ENCODE measurements at regions of chr13 and their contacts with region 1.

Region 1: GRCh38 chr13:43074824-43075510 is 51.6 kb downstream of the DNAJC15 start:
- DNase-seq: no peak
- ATAC-seq: peak; percentile 90
- H3K4me3 ChIP-seq: peak overlapping the region; percentile 9; the same call in 1 of the 2 replicates
- H3K27ac ChIP-seq: peak overlapping the region; percentile 60
- H3K4me1 ChIP-seq: peaks cover 36% of the 10 kb centered on the region
- H3K27me3 ChIP-seq: no peaks in the 10 kb centered on the region
- CTCF ChIP-seq: no peak
- EP300 ChIP-seq: peak in 1 of 2 experiments; percentile 56; a peak in 2 of 4 replicates
- POLR2A ChIP-seq: no peak
- RAD21 ChIP-seq: no peak

Region 2: DNA sequence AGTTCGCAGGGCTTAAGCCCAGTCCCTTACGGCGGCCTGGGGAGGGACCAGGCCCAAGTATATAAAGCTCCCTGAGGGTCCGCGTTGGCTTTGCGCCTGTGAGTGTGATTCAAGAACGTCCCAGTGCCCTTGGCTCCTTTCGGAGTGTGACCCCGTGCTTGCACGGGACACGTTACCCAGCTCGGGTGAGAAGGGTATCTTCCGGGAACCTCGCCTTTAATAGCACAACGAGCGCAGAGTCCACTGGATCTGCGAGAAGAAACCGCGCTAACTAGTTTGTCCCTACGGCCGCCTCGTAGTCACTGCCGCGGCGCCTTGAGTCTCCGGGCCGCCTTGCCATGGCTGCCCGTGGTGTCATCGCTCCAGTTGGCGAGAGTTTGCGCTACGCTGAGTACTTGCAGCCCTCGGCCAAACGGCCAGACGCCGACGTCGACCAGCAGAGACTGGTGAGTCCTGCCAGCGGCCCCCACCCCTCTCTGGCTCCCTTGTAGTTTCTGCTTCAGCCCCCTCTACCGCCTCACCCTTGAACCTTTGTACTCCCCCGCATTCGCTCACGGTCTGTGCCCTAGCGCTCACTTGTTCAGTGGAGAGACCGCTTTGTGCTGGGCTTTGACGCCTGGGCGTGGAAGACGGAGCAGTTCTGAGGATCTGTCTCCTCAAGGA is 51.5 kb before region 1 on chr13 and contains the start of gene DNAJC15:
- CTCF ChIA-PET with region 1: interaction called, 4 read pairs
- POLR2A ChIA-PET with region 1: no interaction called
- RAD21 ChIA-PET with region 1: interaction called, 15 read pairs
- SMC1A ChIA-PET with region 1: interaction called, 11 read pairs
- in situ Hi-C with region 1: no loop called
- intact Hi-C with region 1: loop called (anchors 5 kb)
- DNase-seq: peak; percentile 57
- ATAC-seq: peak; percentile 89
- H3K4me3 ChIP-seq: peak within 1 kb of the TSS; percentile 93
- H3K27ac ChIP-seq: peak within 1 kb of the TSS; percentile 83
- H3K4me1 ChIP-seq: peaks cover 6% of the 10 kb centered on the region
- H3K27me3 ChIP-seq: no peaks in the 10 kb centered on the region
- CTCF ChIP-seq: peak; percentile 22 to 31 (median 30); a peak in 3 of 6 replicates
- EP300 ChIP-seq: no peak
- POLR2A ChIP-seq: peak; percentile 97
- RAD21 ChIP-seq: peak; percentile 25; the same call in 1 of the 2 replicates
- polyA plus RNA-seq, gene DNAJC15: 102 to 104 TPM

Region 3: GRCh38 chr13:43061496-43062265 is 13.3 kb before region 1 on chr13:
- CTCF ChIA-PET with region 1: interaction called, 9 read pairs
- POLR2A ChIA-PET with region 1: interaction called, 5 read pairs
- RAD21 ChIA-PET with region 1: interaction called, 8 read pairs
- SMC1A ChIA-PET with region 1: interaction called, 48 read pairs
- in situ Hi-C with region 1: no loop called
- intact Hi-C with region 1: no loop called
- DNase-seq: no peak
- ATAC-seq: no peak
- H3K4me3 ChIP-seq: no peak overlapping the region
- H3K27ac ChIP-seq: no peak overlapping the region
- H3K4me1 ChIP-seq: peaks cover 15% of the 10 kb centered on the region
- H3K27me3 ChIP-seq: no peaks in the 10 kb centered on the region
- CTCF ChIP-seq: no peak
- EP300 ChIP-seq: no peak
- POLR2A ChIP-seq: no peak
- RAD21 ChIP-seq: no peak

Region 4: GRCh38 chr13:43085545-43085944 is 10.6 kb after region 1 on chr13:
- CTCF ChIA-PET with region 1: interaction called, 10 read pairs
- POLR2A ChIA-PET with region 1: interaction called, 3 read pairs
- RAD21 ChIA-PET with region 1: interaction called, 7 read pairs
- SMC1A ChIA-PET with region 1: interaction called, 23 read pairs
- in situ Hi-C with region 1: no loop called
- intact Hi-C with region 1: no loop called
- DNase-seq: no peak
- ATAC-seq: no peak
- H3K4me3 ChIP-seq: no peak overlapping the region
- H3K27ac ChIP-seq: no peak overlapping the region
- H3K4me1 ChIP-seq: peaks cover 2% of the 10 kb centered on the region; the same call in 1 of the 2 replicates
- H3K27me3 ChIP-seq: no peaks in the 10 kb centered on the region
- CTCF ChIP-seq: peak; percentile 3 to 44 (median 30); a peak in 2 of 6 replicates
- EP300 ChIP-seq: no peak
- POLR2A ChIP-seq: no peak
- RAD21 ChIP-seq: peak; percentile 36; the same call in 1 of the 2 replicates